Gastrocnemius medialis (tissue), 4 donors: ENCODE measurements at regions of chr12 and their contacts with region 1.

Region 1: DNA sequence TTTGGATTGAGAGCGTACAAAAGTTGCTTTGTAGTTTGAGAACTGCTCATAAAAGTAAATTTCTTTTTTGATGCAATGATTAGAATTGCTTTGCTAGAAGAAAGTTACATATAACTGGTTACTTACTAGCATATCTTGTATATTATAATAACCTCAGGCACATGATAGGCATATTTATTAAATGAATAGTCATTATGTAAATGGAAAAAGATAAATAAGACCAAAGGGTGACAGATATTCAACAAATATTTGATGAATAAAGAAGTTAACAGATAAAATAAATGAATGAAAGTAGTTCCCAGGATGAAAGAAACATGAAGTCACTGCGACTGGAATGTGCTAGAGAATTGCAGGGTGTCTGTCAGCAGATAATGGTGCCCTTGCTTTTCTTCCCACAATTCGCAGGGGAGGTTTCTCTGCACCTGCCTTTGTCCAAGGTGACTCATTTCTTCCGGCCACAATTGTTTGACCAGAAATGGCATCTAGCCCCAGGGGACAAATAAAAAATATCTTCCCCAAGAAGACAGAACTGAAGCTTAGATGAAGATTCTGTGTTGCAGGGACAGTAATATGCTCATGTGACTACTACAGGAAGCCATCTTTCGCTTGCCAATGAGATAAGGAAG is 315.9 kb upstream of the TBX3 start:
- DNase-seq: no peak
- ATAC-seq: no peak
- H3K4me3 ChIP-seq: no peak overlapping the region
- H3K27ac ChIP-seq: no peak overlapping the region
- H3K4me1 ChIP-seq: no peaks in the 10 kb centered on the region
- H3K27me3 ChIP-seq: no peaks in the 10 kb centered on the region
- CTCF ChIP-seq: no peak
- POLR2A ChIP-seq: no peak

Region 2: GRCh38 chr12:115096588-115097397 is 96.9 kb after region 1 on chr12:
- in situ Hi-C with region 1: loop called in 1 of 4 experiments (anchors 25 kb)
- intact Hi-C with region 1: no loop called
- DNase-seq: no peak
- ATAC-seq: no peak
- H3K4me3 ChIP-seq: no peak overlapping the region
- H3K27ac ChIP-seq: no peak overlapping the region
- H3K4me1 ChIP-seq: no peaks in the 10 kb centered on the region
- H3K27me3 ChIP-seq: no peaks in the 10 kb centered on the region
- CTCF ChIP-seq: no peak
- POLR2A ChIP-seq: no peak

Region 3: GRCh38 chr12:115351221-115352077 is 351.5 kb after region 1 on chr12:
- in situ Hi-C with region 1: no loop called
- intact Hi-C with region 1: no loop called
- DNase-seq: no peak
- ATAC-seq: no peak
- H3K4me3 ChIP-seq: no peak overlapping the region
- H3K27ac ChIP-seq: no peak overlapping the region
- H3K4me1 ChIP-seq: no peaks in the 10 kb centered on the region
- H3K27me3 ChIP-seq: no peaks in the 10 kb centered on the region
- CTCF ChIP-seq: no peak
- POLR2A ChIP-seq: no peak